Panc1 (cell line): ENCODE measurements at regions of chr17 and their contacts with region 1.

Region 1: GRCh38 chr17:17179371-17179827 is 26.7 kb downstream of the PLD6 start:
- DNase-seq: no peak
- ATAC-seq: no peak
- H3K4me3 ChIP-seq: no peak overlapping the region
- H3K27ac ChIP-seq: no peak overlapping the region
- H3K4me1 ChIP-seq: no peaks in the 10 kb centered on the region
- H3K27me3 ChIP-seq: no peaks in the 10 kb centered on the region
- CTCF ChIP-seq: no peak

Region 2: DNA sequence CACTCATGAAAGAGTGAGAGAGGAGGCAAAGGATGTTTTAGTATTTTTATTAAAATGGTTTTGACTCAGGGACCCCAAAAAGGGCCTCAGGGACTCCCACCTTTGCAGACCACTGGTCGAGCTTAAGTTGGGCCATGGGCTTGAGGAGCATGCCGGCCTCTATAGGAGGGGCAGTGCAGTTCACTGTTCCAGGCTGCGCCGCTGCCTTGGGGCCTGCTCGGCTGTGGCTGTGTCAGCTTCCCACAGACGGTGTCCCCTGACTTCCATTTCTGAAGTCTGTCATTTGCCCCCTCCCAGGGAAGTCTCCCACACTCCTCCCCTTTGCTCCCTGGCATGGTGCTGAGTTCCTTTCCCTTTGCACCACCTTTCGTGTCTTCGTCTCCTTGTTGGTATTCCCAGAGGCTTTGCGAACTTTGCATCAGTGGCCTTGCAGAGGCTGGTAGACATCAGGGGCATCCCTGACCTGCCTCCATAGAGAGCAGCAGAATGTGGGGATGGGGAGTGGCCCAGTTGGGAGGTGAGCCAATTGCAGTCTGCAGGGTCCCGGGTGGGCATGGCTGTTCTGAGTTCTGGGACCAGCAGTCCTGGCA is 120.0 kb before region 1 on chr17:
- CTCF ChIA-PET with region 1: interaction called, 10 read pairs
- POLR2A ChIA-PET with region 1: no interaction called
- in situ Hi-C with region 1: no loop called
- intact Hi-C with region 1: no loop called
- DNase-seq: no peak
- ATAC-seq: no peak
- H3K4me3 ChIP-seq: no peak overlapping the region
- H3K27ac ChIP-seq: no peak overlapping the region
- H3K4me1 ChIP-seq: no peaks in the 10 kb centered on the region
- H3K27me3 ChIP-seq: no peaks in the 10 kb centered on the region
- CTCF ChIP-seq: no peak

Region 3: GRCh38 chr17:17141860-17142552 is 37.4 kb before region 1 on chr17:
- CTCF ChIA-PET with region 1: no interaction called
- POLR2A ChIA-PET with region 1: no interaction called
- in situ Hi-C with region 1: no loop called
- intact Hi-C with region 1: no loop called
- DNase-seq: no peak
- ATAC-seq: no peak; the same call in 1 of the 2 replicates
- H3K4me3 ChIP-seq: no peak overlapping the region
- H3K27ac ChIP-seq: no peak overlapping the region
- H3K4me1 ChIP-seq: no peaks in the 10 kb centered on the region
- H3K27me3 ChIP-seq: no peaks in the 10 kb centered on the region
- CTCF ChIP-seq: peak; percentile 93

Region 4: DNA sequence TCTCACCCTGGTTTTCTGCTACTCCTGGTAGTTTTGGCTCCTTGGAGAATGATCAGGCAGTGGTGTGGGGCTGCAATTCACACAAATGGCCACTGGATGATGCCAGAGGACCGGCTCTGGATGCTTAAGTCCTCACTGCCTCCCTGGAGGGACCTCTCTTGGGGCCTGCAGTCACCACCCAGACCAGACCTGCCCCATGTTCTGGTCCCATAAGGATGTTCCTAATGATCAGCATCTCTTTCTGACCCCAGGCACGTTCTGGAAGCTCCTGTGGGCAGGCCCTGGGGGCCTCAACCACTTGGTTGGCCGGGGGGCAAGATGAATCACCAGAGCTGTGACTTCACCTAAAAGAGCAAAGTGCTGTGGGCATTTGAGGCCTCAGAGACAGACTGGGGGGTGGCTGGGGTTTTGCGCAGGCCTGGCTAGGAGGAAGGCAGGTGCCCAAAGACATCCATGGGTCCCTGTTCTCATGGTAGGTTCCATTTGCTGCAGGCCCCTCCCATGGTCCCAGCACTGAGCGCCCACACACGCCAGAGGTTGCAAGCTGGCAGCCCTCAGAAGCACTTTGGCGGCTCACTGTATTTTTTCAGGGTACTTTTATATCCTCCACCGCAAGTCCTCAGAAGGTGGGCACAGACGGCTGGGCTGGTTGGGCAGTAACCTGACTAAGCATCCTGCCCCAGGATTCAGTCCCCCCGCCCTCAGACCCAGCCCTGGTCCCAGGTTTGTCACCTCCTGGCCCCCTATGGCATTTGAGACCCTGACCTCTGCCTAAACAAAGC is 176.9 kb after region 1 on chr17:
- CTCF ChIA-PET with region 1: no interaction called
- POLR2A ChIA-PET with region 1: no interaction called
- in situ Hi-C with region 1: no loop called
- intact Hi-C with region 1: no loop called
- DNase-seq: peak; percentile 84
- ATAC-seq: peak; percentile 88
- H3K4me3 ChIP-seq: no peak overlapping the region
- H3K27ac ChIP-seq: no peak overlapping the region
- H3K4me1 ChIP-seq: no peaks in the 10 kb centered on the region
- H3K27me3 ChIP-seq: no peaks in the 10 kb centered on the region
- CTCF ChIP-seq: peak; percentile 100